Activated B cell treated with CpG ODN at 0.5 μM for 24 hours (primary cell): ENCODE measurements at regions of chr4 and their contacts with region 1.

Region 1: DNA sequence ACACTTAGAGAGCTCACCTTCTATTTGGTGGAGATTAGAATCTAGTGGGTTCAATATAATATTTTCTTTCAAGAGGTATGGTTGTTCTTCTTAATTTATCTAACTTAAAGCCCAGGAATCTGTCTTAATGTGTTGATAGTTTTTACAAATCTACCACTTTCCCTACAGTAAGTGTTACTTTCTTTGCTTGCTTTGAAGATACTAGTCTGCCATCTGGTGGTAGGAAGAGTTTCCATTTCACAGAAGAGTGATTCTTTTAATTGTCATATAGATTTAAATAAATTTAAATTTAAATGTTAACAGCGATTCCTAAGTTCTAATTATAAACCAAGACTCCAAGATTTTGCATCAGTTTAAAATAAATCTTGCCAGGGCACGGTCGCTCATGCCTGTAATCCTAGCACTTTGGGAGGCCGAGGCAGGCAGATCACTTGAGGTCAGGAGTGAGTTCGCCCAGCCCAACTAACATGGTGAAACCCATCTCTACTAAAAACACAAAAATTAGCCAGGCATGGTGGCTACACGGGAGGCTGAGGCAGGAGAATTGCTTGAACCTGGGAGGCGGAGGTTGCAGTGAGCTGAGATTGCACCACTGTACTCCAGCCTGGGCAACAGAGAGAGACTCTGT is 43.5 kb downstream of the NUDT9 start:
- DNase-seq: no peak
- ATAC-seq: no peak
- H3K4me3 Mint-ChIP-seq: no peak overlapping the region
- H3K27ac Mint-ChIP-seq: no peak overlapping the region
- H3K4me1 Mint-ChIP-seq: no peaks in the 10 kb centered on the region
- H3K27me3 Mint-ChIP-seq: no peaks in the 10 kb centered on the region
- CTCF ChIP-seq: no peak

Region 2: DNA sequence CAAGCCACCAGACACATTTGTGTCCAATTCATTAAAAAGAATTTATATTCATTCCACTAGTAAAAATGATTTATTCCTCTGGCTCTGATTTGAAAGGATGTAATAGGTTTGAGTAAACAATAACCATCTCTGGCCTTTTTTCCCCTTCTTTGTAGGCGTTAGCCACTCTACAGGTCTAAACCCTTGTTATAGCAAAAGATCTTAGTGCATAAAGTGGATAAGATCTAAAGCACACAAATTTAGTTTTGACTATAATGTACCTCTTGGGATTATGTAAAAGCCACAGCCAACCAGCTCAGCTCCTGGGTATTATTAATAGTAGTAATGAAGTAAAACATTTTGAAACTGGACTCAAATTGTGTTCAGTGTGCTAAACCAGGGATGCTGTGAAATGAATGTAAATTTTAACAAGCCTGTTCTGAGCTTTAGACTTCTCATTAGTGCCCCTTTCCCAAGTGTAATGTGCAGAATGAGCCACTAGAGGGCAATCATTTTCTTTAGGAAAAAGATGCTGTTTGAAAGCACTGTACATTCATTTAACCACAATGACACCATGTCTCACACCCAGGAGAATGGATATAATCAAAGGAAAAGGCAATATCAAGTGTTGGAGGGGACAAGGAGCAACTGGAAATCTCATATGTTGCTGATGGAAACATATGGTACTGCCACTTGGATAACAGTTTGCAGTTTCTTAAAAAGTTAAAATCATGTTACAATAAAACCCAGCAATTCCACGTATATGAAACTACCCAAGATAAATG is 315.2 kb before region 1 on chr4:
- CTCF ChIA-PET with region 1: interaction called, 18 read pairs
- POLR2A ChIA-PET with region 1: no interaction called
- intact Hi-C with region 1: loop called (anchors 1 kb)
- DNase-seq: no peak
- ATAC-seq: peak; percentile 77
- H3K4me3 Mint-ChIP-seq: no peak overlapping the region
- H3K27ac Mint-ChIP-seq: no peak overlapping the region
- H3K4me1 Mint-ChIP-seq: no peaks in the 10 kb centered on the region
- H3K27me3 Mint-ChIP-seq: no peaks in the 10 kb centered on the region
- CTCF ChIP-seq: peak; percentile 16

Region 3: GRCh38 chr4:87235020-87235671 is 230.7 kb before region 1 on chr4:
- CTCF ChIA-PET with region 1: no interaction called
- POLR2A ChIA-PET with region 1: no interaction called
- intact Hi-C with region 1: loop called (anchors 2 kb)
- DNase-seq: no peak
- ATAC-seq: no peak
- H3K4me3 Mint-ChIP-seq: peak overlapping the region; percentile 80
- H3K27ac Mint-ChIP-seq: no peak overlapping the region
- H3K4me1 Mint-ChIP-seq: peaks cover 3% of the 10 kb centered on the region
- H3K27me3 Mint-ChIP-seq: peaks cover 1% of the 10 kb centered on the region
- CTCF ChIP-seq: no peak

Region 4: DNA sequence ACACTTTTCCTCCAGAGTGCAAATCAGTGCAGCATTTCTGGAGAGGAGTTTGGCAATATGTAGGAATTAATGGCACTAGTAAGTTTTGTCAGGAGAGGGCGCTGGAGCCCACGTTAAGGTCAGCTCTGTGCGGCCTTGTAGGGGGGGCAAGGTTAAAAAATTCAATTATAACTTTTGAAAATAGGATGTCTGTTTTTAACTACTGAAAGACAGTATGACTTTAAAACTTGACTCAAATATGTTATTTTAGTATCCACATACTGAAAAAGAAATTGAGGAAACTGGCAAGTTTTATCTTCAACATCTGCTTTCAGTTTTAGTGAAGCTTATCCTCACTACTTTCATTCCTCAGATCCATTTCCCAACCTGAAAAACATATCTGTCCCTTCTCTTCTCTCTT is 112.3 kb before region 1 on chr4:
- CTCF ChIA-PET with region 1: interaction called, 7 read pairs
- POLR2A ChIA-PET with region 1: no interaction called
- intact Hi-C with region 1: loop called (anchors 2 kb)
- DNase-seq: no peak
- ATAC-seq: no peak
- H3K4me3 Mint-ChIP-seq: no peak overlapping the region
- H3K27ac Mint-ChIP-seq: no peak overlapping the region
- H3K4me1 Mint-ChIP-seq: no peaks in the 10 kb centered on the region
- H3K27me3 Mint-ChIP-seq: no peaks in the 10 kb centered on the region
- CTCF ChIP-seq: no peak

Region 5: GRCh38 chr4:87375719-87376291 is 90.0 kb before region 1 on chr4:
- CTCF ChIA-PET with region 1: interaction called, 118 read pairs
- POLR2A ChIA-PET with region 1: no interaction called
- intact Hi-C with region 1: loop called (anchors 1 kb)
- DNase-seq: no peak
- ATAC-seq: peak; percentile 73
- H3K4me3 Mint-ChIP-seq: no peak overlapping the region
- H3K27ac Mint-ChIP-seq: no peak overlapping the region
- H3K4me1 Mint-ChIP-seq: peaks cover 7% of the 10 kb centered on the region
- H3K27me3 Mint-ChIP-seq: no peaks in the 10 kb centered on the region
- CTCF ChIP-seq: no peak